A549 (cell line): ENCODE measurements at regions of chr2 and their contacts with region 1.

Region 1: GRCh38 chr2:10043906-10044601 is 704 bp downstream of the KLF11 start:
- DNase-seq: peak; percentile 79 to 93
- ATAC-seq: peak; percentile 48 to 61
- H3K4me3 ChIP-seq: peak overlapping the region; percentile 89
- H3K27ac ChIP-seq: peak overlapping the region; percentile 87 to 90
- H3K4me1 ChIP-seq: no peaks in the 10 kb centered on the region; the same call in 2 of the 3 replicates
- CTCF ChIP-seq: no peak
- EP300 ChIP-seq: no peak
- POLR2A ChIP-seq: no peak
- RAD21 ChIP-seq: no peak

Region 2: GRCh38 chr2:9843229-9844035 is 200.6 kb before region 1 on chr2 and contains the start of gene TAF1B:
- CTCF ChIA-PET with region 1: interaction called, 10 read pairs
- POLR2A ChIA-PET with region 1: interaction called, 6 read pairs
- DNase-seq: peak; percentile 95 to 96
- ATAC-seq: peak; percentile 96 to 97
- H3K4me3 ChIP-seq: peak within 1 kb of the TSS; percentile 73
- H3K27ac ChIP-seq: peak within 1 kb of the TSS; percentile 95
- H3K4me1 ChIP-seq: peaks cover 18% of the 10 kb centered on the region; the same call in 2 of the 3 replicates
- CTCF ChIP-seq: no peak
- EP300 ChIP-seq: no peak
- POLR2A ChIP-seq: peak; percentile 76
- RAD21 ChIP-seq: no peak
- polyA plus RNA-seq, gene TAF1B: 40.8 and 51.7 TPM in 2 replicates

Region 3: DNA sequence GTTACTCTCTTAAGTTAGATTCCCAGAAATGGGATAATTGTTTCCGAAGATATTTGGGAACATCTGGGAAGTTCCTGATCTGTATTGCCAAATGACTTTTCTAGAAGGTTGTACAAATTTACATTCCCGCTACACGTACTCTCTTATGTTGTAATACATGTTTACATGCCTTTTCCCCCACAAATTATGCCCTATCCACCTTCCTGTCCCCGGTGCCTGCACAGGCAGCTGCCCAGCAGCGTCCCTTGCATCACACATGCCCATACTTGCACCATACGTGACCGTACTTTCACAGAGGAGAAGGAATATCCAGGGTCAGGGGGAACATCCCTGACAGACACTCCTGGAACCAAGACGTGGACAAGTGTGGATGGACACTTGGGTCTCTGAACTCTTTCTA is 24.9 kb before region 1 on chr2:
- CTCF ChIA-PET with region 1: interaction called, 53 read pairs
- POLR2A ChIA-PET with region 1: no interaction called
- DNase-seq: no peak
- ATAC-seq: no peak
- H3K4me3 ChIP-seq: no peak overlapping the region
- H3K27ac ChIP-seq: no peak overlapping the region
- H3K4me1 ChIP-seq: no peaks in the 10 kb centered on the region
- CTCF ChIP-seq: no peak
- EP300 ChIP-seq: no peak
- POLR2A ChIP-seq: no peak
- RAD21 ChIP-seq: no peak

Region 4: GRCh38 chr2:10057231-10058107 is 13.4 kb after region 1 on chr2:
- CTCF ChIA-PET with region 1: interaction called, 80 read pairs
- POLR2A ChIA-PET with region 1: no interaction called
- DNase-seq: no peak
- ATAC-seq: peak in 1 of 2 experiments; percentile 16; a peak in 3 of 6 replicates
- H3K4me3 ChIP-seq: no peak overlapping the region
- H3K27ac ChIP-seq: no peak overlapping the region
- H3K4me1 ChIP-seq: no peaks in the 10 kb centered on the region
- CTCF ChIP-seq: no peak
- EP300 ChIP-seq: no peak
- POLR2A ChIP-seq: no peak
- RAD21 ChIP-seq: no peak

Region 5: GRCh38 chr2:10072656-10073480 is 28.8 kb after region 1 on chr2:
- CTCF ChIA-PET with region 1: interaction called, 36 read pairs
- POLR2A ChIA-PET with region 1: no interaction called
- DNase-seq: peak; percentile 88 to 95
- ATAC-seq: peak; percentile 94 to 96
- H3K4me3 ChIP-seq: no peak overlapping the region
- H3K27ac ChIP-seq: no peak overlapping the region
- H3K4me1 ChIP-seq: peaks cover 4% of the 10 kb centered on the region; the same call in 1 of the 3 replicates
- CTCF ChIP-seq: peak; percentile 95
- EP300 ChIP-seq: no peak
- POLR2A ChIP-seq: no peak
- RAD21 ChIP-seq: peak; percentile 81 to 85

Region 6: DNA sequence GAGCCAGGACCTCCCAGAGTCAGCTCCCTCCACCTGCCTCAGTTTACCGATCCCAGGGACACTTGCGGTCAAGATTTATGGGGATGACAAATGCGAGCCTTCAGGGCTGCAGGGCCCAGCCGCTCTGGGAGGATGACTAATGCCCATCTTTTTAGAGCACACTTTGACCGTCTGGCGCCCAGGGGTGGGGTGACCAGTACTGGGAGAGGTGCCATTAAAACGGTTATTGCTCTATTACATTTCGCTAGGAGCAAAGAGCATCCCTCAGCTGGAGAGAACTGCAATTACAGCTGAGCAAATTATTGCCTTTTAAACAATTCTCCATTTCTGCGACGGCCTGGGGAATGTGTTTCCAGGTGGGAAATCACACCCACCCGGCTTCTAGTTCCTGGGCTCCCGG is 216.1 kb after region 1 on chr2:
- CTCF ChIA-PET with region 1: no interaction called
- POLR2A ChIA-PET with region 1: no interaction called
- DNase-seq: no peak
- ATAC-seq: no peak; a peak in 1 of 6 replicates
- H3K4me3 ChIP-seq: no peak overlapping the region
- H3K27ac ChIP-seq: no peak overlapping the region
- H3K4me1 ChIP-seq: peaks cover 12% of the 10 kb centered on the region
- CTCF ChIP-seq: no peak
- EP300 ChIP-seq: no peak
- POLR2A ChIP-seq: no peak
- RAD21 ChIP-seq: no peak